ENCODE measurements at regions of chr7 and their contacts with region 1.

Region 1: DNA sequence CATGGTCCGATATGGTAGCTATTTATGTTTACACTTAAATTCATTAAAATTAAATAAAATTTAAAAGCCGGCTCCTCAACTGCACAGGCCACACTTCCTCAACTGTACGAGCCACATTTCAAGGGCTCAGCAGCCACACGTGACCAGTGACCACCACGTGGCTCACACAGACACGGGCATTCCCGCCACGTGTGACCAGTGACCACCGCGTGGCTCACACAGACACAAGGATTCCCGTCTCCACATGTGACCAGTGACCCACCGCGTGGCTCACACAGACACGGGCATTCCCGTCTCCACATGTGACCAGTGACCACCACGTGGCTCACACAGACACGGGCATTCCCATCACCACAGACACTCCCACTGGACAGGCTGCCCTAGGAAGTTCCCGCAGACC is 91.3 kb downstream of the PDGFA start:
- DNase-seq: no peak
- H3K4me3 ChIP-seq: no peak overlapping the region
- H3K27ac ChIP-seq: no peak overlapping the region
- H3K4me1 ChIP-seq: no peaks in the 10 kb centered on the region
- H3K27me3 ChIP-seq: peaks cover 95% of the 10 kb centered on the region
- CTCF ChIP-seq: no peak

Region 2: GRCh38 chr7:441684-442421 is 13.5 kb after region 1 on chr7:
- CTCF ChIA-PET with region 1: no interaction called
- POLR2A ChIA-PET with region 1: interaction called, 10 read pairs
- intact Hi-C with region 1: no loop called
- DNase-seq: peak in 1 of 2 experiments; percentile 50
- H3K4me3 ChIP-seq: no peak overlapping the region
- H3K27ac ChIP-seq: no peak overlapping the region
- H3K4me1 ChIP-seq: no peaks in the 10 kb centered on the region
- H3K27me3 ChIP-seq: peaks cover 36% of the 10 kb centered on the region; the same call in 1 of the 2 replicates
- CTCF ChIP-seq: no peak

Region 3: GRCh38 chr7:665736-666453 is 237.5 kb after region 1 on chr7:
- CTCF ChIA-PET with region 1: no interaction called
- POLR2A ChIA-PET with region 1: no interaction called
- intact Hi-C with region 1: no loop called
- DNase-seq: peak in 1 of 2 experiments; percentile 29
- H3K4me3 ChIP-seq: no peak overlapping the region
- H3K27ac ChIP-seq: no peak overlapping the region
- H3K4me1 ChIP-seq: no peaks in the 10 kb centered on the region
- H3K27me3 ChIP-seq: no peaks in the 10 kb centered on the region
- CTCF ChIP-seq: no peak

Measured in PC-9 (cell line).